GM12878 (cell line): ENCODE measurements at regions of chr19 and their contacts with region 1.

Region 1: DNA sequence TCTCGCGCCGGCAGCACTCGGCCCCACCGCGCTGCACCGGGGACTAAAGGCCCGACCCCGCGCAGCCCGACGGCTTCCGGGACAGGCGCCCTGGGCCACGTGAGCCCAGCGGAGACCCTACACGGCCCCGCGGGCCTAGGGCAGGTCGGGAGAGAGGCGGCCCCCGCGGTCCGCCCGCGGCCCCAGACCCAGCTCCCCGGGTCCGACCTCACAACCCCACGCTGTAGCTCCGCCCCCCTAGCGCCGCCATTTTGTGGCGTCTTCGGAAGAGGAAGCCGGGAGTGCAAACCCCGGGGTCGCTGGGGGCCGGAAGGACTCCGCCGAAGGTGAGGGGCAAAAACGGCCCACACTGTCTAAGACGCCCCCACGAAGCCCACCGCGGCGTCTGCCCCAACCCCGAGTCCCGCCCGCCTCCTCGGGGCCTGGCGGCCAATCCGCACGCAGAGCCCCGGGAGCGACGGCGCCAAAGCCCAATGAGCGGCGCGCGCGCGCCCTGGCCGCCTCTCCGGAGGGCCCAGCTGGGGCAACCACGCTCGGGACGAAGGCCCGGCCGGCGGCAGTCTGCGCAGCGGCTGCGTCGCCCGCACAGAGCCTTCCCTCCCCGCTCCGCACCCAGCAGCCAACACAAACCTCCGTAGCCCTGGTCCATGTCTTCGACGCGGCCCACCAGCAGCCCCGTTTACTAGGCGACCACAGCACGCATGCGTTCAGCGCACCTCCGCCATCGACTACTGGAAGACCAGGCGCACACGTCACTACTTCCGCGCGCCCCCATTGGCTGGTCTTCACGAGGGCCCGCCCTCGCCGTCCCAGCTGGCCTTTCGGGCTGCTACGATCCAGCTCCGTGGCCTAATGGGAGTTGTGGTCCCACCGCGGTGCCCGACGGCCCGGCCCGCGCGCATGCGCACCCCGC is at the start of gene AKAP8:
- DNase-seq: peak; percentile 94
- ATAC-seq: peak; percentile 92
- H3K4me3 ChIP-seq: peak within 1 kb of the TSS; percentile 94
- H3K27ac ChIP-seq: peak within 1 kb of the TSS; percentile 91
- H3K4me1 ChIP-seq: peaks cover 23% of the 10 kb centered on the region
- H3K27me3 ChIP-seq: no peaks in the 10 kb centered on the region
- CTCF ChIP-seq: no peak
- EP300 ChIP-seq: no peak
- POLR2A ChIP-seq: peak; percentile 90
- RAD21 ChIP-seq: no peak
- polyA plus RNA-seq, gene AKAP8: 5.3 to 5.5 TPM

Region 2: GRCh38 chr19:15264061-15264932 is 115.0 kb before region 1 on chr19:
- CTCF ChIA-PET with region 1: no interaction called
- POLR2A ChIA-PET with region 1: interaction called, 3 read pairs
- RAD21 ChIA-PET with region 1: interaction called, 4 read pairs
- SMC1A ChIA-PET with region 1: interaction called, 6 read pairs
- in situ Hi-C with region 1: no loop called
- intact Hi-C with region 1: loop called (anchors 5 kb)
- DNase-seq: no peak
- ATAC-seq: peak; percentile 83
- H3K4me3 ChIP-seq: no peak overlapping the region
- H3K27ac ChIP-seq: no peak overlapping the region
- H3K4me1 ChIP-seq: no peaks in the 10 kb centered on the region
- H3K27me3 ChIP-seq: no peaks in the 10 kb centered on the region
- CTCF ChIP-seq: peak; percentile 74 to 79 (median 78)
- EP300 ChIP-seq: no peak
- POLR2A ChIP-seq: peak; percentile 8; the same call in 1 of the 2 replicates
- RAD21 ChIP-seq: peak; percentile 76

Region 3: DNA sequence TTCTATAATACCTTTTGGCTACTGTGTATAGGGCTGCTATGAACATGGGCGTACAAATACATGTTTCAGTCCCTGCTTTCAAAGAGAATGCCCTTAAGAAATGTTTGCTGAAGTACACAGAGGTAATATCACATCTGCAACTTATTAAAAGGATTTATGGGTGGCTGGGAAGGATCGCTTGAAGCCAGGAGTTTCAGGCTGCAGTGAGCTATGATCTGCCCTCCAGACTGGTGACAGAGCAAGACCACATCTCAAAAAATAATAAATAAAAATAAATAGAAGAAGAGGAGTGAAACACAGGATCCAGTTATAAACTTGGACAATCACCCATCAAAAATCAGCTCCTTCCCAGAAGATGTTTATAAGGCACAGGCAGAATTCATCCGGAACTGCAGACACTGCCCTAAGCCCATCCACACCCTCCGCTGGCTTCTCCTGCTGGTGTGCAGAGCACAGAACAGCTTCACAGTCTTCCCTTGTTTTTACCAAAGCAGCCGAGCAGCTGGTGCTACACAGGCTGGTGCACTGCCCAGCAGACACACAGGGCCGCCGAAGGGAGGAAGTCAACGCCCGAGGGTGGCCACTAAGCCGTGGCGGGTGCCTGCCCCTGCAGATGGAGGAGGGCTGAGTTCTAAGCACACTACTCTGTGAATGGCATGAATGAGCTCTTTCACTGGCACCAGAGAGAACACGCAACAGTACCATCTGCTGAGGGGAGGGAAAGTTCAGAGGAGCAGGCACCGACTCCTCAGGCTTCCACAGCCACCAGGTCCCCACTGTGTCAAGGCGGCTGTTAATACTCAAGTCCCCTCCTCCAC is 91.0 kb before region 1 on chr19:
- CTCF ChIA-PET with region 1: interaction called, 3 read pairs
- POLR2A ChIA-PET with region 1: interaction called, 5 read pairs
- RAD21 ChIA-PET with region 1: interaction called, 5 read pairs
- SMC1A ChIA-PET with region 1: interaction called, 10 read pairs
- in situ Hi-C with region 1: no loop called
- intact Hi-C with region 1: no loop called
- DNase-seq: no peak
- ATAC-seq: peak; percentile 71
- H3K4me3 ChIP-seq: peak overlapping the region; percentile 44
- H3K27ac ChIP-seq: peak overlapping the region; percentile 68
- H3K4me1 ChIP-seq: peaks cover 83% of the 10 kb centered on the region
- H3K27me3 ChIP-seq: no peaks in the 10 kb centered on the region
- CTCF ChIP-seq: no peak
- EP300 ChIP-seq: no peak
- POLR2A ChIP-seq: no peak; the same call in 1 of the 2 replicates
- RAD21 ChIP-seq: no peak

Region 4: GRCh38 chr19:15466851-15467733 is 87.8 kb after region 1 on chr19:
- CTCF ChIA-PET with region 1: interaction called, 4 read pairs
- POLR2A ChIA-PET with region 1: interaction called, 5 read pairs
- RAD21 ChIA-PET with region 1: interaction called, 3 read pairs
- SMC1A ChIA-PET with region 1: no interaction called
- in situ Hi-C with region 1: no loop called
- intact Hi-C with region 1: loop called (anchors 5 kb)
- DNase-seq: peak; percentile 97
- ATAC-seq: peak; percentile 71
- H3K4me3 ChIP-seq: peak overlapping the region; percentile 17; the same call in 1 of the 2 replicates
- H3K27ac ChIP-seq: peak overlapping the region; percentile 80
- H3K4me1 ChIP-seq: peaks cover 22% of the 10 kb centered on the region
- H3K27me3 ChIP-seq: no peaks in the 10 kb centered on the region
- CTCF ChIP-seq: no peak
- EP300 ChIP-seq: peak in 1 of 2 experiments; percentile 25; a peak in 1 of 4 replicates
- POLR2A ChIP-seq: no peak
- RAD21 ChIP-seq: no peak

Region 5: GRCh38 chr19:15863272-15863671 is 483.9 kb after region 1 on chr19:
- CTCF ChIA-PET with region 1: no interaction called
- POLR2A ChIA-PET with region 1: no interaction called
- RAD21 ChIA-PET with region 1: no interaction called
- SMC1A ChIA-PET with region 1: no interaction called
- in situ Hi-C with region 1: no loop called
- intact Hi-C with region 1: no loop called
- DNase-seq: no peak
- ATAC-seq: no peak
- H3K4me3 ChIP-seq: no peak overlapping the region
- H3K27ac ChIP-seq: no peak overlapping the region
- H3K4me1 ChIP-seq: no peaks in the 10 kb centered on the region
- H3K27me3 ChIP-seq: no peaks in the 10 kb centered on the region
- CTCF ChIP-seq: no peak
- EP300 ChIP-seq: no peak
- POLR2A ChIP-seq: no peak
- RAD21 ChIP-seq: no peak